WTC11 (cell line): ENCODE measurements at regions of chr2 and their contacts with region 1.

Region 1: DNA sequence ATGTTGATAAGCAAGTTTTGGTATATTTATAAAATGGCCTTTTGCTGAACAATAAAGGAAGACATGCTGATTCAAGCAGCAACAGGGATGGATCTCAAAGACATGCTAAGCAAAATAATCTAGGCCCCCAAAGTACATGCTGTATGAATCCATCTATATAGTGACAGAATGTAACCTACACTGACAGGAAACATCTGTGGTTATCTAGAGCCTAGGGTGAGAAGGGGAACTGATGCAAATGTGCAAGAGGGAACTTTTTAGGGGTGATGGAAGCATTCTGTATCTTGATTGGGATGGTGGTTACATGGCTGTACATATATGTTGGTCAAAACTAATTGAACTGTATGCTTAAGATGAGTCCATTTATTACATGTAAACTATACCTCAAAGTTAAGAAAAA is 24.2 kb downstream of the CNRIP1 start:
- DNase-seq: no peak
- ATAC-seq: no peak
- H3K4me3 Mint-ChIP-seq: no peak overlapping the region
- H3K27ac Mint-ChIP-seq: no peak overlapping the region
- H3K4me1 Mint-ChIP-seq: no peaks in the 10 kb centered on the region
- H3K27me3 Mint-ChIP-seq: peaks cover 7% of the 10 kb centered on the region; the same call in 1 of the 2 replicates
- CTCF ChIP-seq: no peak

Region 2: GRCh38 chr2:68044099-68044498 is 251.4 kb before region 1 on chr2:
- CTCF ChIA-PET with region 1: no interaction called
- POLR2A ChIA-PET with region 1: no interaction called
- DNase-seq: no peak
- ATAC-seq: no peak
- H3K4me3 Mint-ChIP-seq: no peak overlapping the region
- H3K27ac Mint-ChIP-seq: no peak overlapping the region
- H3K4me1 Mint-ChIP-seq: no peaks in the 10 kb centered on the region
- H3K27me3 Mint-ChIP-seq: no peaks in the 10 kb centered on the region
- CTCF ChIP-seq: no peak

Region 3: DNA sequence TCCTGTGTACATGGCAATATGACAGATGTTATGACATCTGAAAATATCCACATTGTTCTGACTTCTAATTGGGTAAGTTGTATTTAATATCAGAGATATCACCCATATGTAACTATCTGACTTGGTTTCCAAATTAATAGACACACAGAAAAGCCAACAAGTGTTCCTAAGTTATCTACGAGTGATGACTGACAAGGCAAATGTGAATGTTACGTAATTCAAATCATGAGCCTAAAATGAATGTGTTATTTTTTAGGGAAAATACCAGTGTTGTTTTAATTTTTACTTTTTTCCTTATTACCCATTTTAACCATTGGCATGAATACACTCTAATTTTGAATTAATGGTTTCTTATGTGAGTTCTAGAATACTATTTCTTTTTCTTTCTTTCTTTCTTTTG is 153.6 kb before region 1 on chr2:
- CTCF ChIA-PET with region 1: no interaction called
- POLR2A ChIA-PET with region 1: no interaction called
- DNase-seq: no peak
- ATAC-seq: no peak
- H3K4me3 Mint-ChIP-seq: no peak overlapping the region
- H3K27ac Mint-ChIP-seq: no peak overlapping the region
- H3K4me1 Mint-ChIP-seq: no peaks in the 10 kb centered on the region
- H3K27me3 Mint-ChIP-seq: no peaks in the 10 kb centered on the region
- CTCF ChIP-seq: no peak

Region 4: GRCh38 chr2:68274022-68274421 is 21.5 kb before region 1 on chr2:
- CTCF ChIA-PET with region 1: interaction called, 10 read pairs
- POLR2A ChIA-PET with region 1: no interaction called
- DNase-seq: no peak
- ATAC-seq: peak; percentile 92
- H3K4me3 Mint-ChIP-seq: no peak overlapping the region
- H3K27ac Mint-ChIP-seq: no peak overlapping the region
- H3K4me1 Mint-ChIP-seq: no peaks in the 10 kb centered on the region
- H3K27me3 Mint-ChIP-seq: no peaks in the 10 kb centered on the region
- CTCF ChIP-seq: no peak

Region 5: GRCh38 chr2:68282811-68283418 is 12.6 kb before region 1 on chr2:
- CTCF ChIA-PET with region 1: interaction called, 27 read pairs
- POLR2A ChIA-PET with region 1: no interaction called
- DNase-seq: no peak
- ATAC-seq: peak; percentile 52; the same call in 1 of the 2 replicates
- H3K4me3 Mint-ChIP-seq: no peak overlapping the region
- H3K27ac Mint-ChIP-seq: no peak overlapping the region
- H3K4me1 Mint-ChIP-seq: peaks cover 2% of the 10 kb centered on the region; the same call in 1 of the 2 replicates
- H3K27me3 Mint-ChIP-seq: peaks cover 4% of the 10 kb centered on the region
- CTCF ChIP-seq: peak; percentile 17; the same call in 1 of the 2 replicates

Region 6: GRCh38 chr2:68319398-68320117 is 24.0 kb after region 1 on chr2 and contains the start of gene CNRIP1:
- CTCF ChIA-PET with region 1: interaction called, 14 read pairs
- POLR2A ChIA-PET with region 1: no interaction called
- DNase-seq: peak; percentile 64
- ATAC-seq: peak; percentile 72
- H3K4me3 Mint-ChIP-seq: peak within 1 kb of the TSS; percentile 78
- H3K27ac Mint-ChIP-seq: no peak within 1 kb of the TSS
- H3K4me1 Mint-ChIP-seq: peaks cover 12% of the 10 kb centered on the region
- H3K27me3 Mint-ChIP-seq: peaks cover 68% of the 10 kb centered on the region
- CTCF ChIP-seq: no peak
- total RNA-seq, gene CNRIP1: 1.3 to 1.6 TPM (median 1.4 TPM) in 3 replicates

Region 7: GRCh38 chr2:68365087-68365486 is 69.6 kb after region 1 on chr2 and contains the start of gene PLEK:
- CTCF ChIA-PET with region 1: no interaction called
- POLR2A ChIA-PET with region 1: no interaction called
- DNase-seq: no peak
- ATAC-seq: no peak
- H3K4me3 Mint-ChIP-seq: no peak within 1 kb of the TSS
- H3K27ac Mint-ChIP-seq: no peak within 1 kb of the TSS
- H3K4me1 Mint-ChIP-seq: peaks cover 4% of the 10 kb centered on the region; the same call in 1 of the 2 replicates
- H3K27me3 Mint-ChIP-seq: peaks cover 29% of the 10 kb centered on the region
- CTCF ChIP-seq: no peak
- total RNA-seq, gene PLEK: 0.26 to 0.46 TPM (median 0.37 TPM) in 3 replicates

Region 8: DNA sequence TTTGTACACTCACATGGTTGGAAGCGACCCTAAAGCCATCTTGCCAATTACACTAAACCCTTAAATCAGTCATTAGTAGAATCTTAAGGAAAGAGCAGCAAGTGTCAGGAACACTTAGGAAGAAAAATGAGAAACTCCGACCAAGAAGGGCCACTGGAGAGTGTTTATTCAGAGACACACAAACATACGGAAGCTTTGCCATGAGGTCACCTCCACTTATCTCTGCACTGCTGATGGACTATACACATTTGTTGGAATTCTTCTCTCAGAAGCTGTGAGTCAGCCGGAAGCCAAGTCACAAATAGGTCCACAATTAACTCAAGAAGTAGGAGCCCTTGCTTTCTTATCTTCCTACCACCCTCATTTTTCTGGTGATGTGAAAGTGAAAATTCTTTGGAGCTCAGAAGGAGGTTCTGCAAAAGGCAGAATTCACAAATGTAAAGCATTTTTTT is 554.1 kb after region 1 on chr2:
- CTCF ChIA-PET with region 1: no interaction called
- POLR2A ChIA-PET with region 1: no interaction called
- DNase-seq: no peak
- ATAC-seq: no peak
- H3K4me3 Mint-ChIP-seq: no peak overlapping the region
- H3K27ac Mint-ChIP-seq: no peak overlapping the region
- H3K4me1 Mint-ChIP-seq: peaks cover 5% of the 10 kb centered on the region; the same call in 1 of the 2 replicates
- H3K27me3 Mint-ChIP-seq: no peaks in the 10 kb centered on the region
- CTCF ChIP-seq: no peak